BJ (cell line): ENCODE measurements at regions of chr22 and their contacts with region 1.

Region 1: GRCh38 chr22:40436505-40437451 is 66.4 kb downstream of the SGSM3 start:
- DNase-seq: no peak
- H3K4me3 ChIP-seq: no peak overlapping the region
- H3K27me3 ChIP-seq: no peaks in the 10 kb centered on the region
- CTCF ChIP-seq: peak; percentile 58

Region 2: DNA sequence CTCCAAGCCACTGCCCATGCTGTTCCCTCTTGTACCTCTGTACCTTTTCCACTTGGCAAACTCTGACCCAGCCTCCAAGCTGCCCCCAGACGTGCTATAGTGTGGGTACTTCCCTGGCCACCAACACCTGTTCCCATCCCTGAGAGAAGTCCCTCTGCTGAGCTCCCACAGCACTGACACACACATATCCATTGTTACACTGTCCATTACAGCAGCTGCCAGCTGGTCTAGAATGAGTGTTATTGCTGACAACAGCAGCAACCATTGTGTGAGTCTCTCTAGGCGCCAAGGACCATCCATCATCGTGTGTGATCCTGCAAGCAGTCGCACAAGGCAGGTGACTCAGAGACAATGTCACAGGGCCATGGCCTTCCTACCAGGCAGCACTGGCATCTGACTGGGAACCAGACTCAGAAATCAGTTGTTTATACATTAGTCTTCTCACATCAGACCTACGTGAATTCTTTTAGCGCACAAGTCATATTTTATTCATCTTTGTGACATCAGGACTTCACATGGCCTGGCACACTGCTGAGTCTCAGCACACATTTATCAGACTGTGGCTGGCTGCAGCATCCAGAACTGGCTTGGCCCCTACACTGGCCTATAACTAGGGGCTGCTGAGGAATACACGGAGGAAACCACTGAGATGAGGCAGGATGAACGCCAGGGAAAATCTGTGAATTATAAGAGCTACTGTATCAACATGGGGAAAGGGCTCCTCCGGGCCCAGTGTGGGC is 10.0 kb before region 1 on chr22:
- CTCF ChIA-PET with region 1: interaction called, 33 read pairs
- POLR2A ChIA-PET with region 1: no interaction called
- DNase-seq: no peak
- H3K4me3 ChIP-seq: no peak overlapping the region
- H3K27me3 ChIP-seq: no peaks in the 10 kb centered on the region
- CTCF ChIP-seq: no peak

Region 3: DNA sequence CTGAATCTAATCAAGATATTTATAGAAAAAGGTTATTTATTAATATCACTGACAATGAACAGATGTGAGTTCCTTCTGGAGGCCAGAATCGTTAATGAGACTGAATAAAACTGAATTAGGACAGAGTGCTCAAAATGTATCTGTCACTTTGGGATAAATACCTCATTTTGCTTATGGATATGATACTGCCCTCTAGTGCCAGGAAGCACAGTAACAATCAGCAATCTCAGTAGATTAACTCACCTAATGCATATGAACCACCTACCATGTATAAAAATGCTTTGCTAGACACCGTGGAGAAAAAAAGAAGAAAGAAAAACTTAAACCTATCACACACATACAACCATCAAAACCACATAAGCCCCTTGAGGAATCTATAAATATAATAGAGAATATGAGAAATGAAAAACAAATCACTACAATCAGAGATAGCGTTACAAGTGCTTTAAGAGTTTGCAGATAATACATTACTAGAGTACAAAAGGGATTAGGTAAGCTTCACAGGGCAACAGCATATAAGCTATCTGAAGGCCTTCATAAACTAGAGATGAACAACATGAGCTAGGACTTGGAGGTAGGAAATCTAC is 51.0 kb after region 1 on chr22:
- CTCF ChIA-PET with region 1: interaction called, 44 read pairs
- POLR2A ChIA-PET with region 1: no interaction called
- DNase-seq: no peak
- H3K4me3 ChIP-seq: no peak overlapping the region
- H3K27me3 ChIP-seq: no peaks in the 10 kb centered on the region
- CTCF ChIP-seq: peak; percentile 70

Region 4: GRCh38 chr22:40635043-40635874 is 198.5 kb after region 1 on chr22:
- CTCF ChIA-PET with region 1: interaction called, 12 read pairs
- POLR2A ChIA-PET with region 1: no interaction called
- DNase-seq: no peak
- H3K4me3 ChIP-seq: peak overlapping the region; percentile 76
- H3K27me3 ChIP-seq: no peaks in the 10 kb centered on the region
- CTCF ChIP-seq: no peak

Region 5: DNA sequence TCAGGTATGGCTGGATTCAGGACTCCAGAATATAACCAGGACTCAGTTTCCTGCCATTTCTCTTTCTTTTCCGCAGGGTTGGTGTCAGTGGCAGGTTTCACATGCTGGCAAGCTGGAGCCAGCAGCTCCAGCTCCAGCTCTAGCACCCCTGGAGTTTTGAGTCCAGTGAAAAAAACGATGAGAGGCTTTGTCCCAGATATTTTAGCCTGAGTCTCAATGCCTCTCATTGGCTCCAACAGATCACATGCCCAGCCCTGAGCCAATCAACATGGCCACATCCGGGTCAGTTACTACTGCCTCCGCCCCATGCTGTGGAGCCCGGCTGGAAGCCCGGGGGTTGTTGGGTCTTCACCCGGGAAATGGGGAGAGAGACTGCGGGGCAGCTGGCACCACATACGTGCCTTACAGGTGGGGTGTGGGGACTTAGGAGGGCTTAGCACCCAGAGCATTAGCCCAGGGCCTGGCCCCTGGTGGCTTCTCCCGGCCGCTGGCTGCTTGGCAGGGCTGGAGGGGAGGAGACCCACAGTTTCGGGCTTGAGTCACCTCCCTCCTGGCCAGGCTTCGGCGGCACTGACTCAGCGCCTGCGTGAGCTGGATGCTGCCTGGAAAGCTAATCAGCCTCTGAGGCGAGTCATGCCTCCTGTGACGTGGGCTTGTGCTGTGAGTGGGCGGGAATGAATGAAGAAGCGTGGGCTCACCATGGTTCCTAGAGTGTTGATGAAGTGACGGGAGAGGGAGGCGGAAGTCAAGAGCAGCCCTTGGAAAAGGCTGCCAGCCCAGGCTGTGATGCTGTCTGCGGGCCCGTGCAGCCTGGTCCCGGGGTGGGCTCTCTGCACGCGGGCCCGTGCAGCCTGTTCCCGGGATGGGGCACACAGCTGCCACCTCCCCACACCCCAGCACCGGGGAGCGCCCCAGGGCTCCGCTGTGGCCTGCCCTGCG is 215.1 kb after region 1 on chr22:
- CTCF ChIA-PET with region 1: interaction called, 55 read pairs
- POLR2A ChIA-PET with region 1: no interaction called
- DNase-seq: peak; percentile 97
- H3K4me3 ChIP-seq: peak overlapping the region; percentile 67
- H3K27me3 ChIP-seq: no peaks in the 10 kb centered on the region
- CTCF ChIP-seq: no peak